ENCODE measurements at regions of chr20 and their contacts with region 1.

Region 1: GRCh38 chr20:23050847-23051631 is 1.6 kb upstream of the THBD start:
- DNase-seq: no peak
- H3K4me3 ChIP-seq: peak overlapping the region; percentile 22
- H3K27me3 ChIP-seq: peaks cover 27% of the 10 kb centered on the region
- CTCF ChIP-seq: peak; percentile 55

Region 2: GRCh38 chr20:23061734-23062561 is 10.9 kb after region 1 on chr20:
- CTCF ChIA-PET with region 1: interaction called, 10 read pairs
- POLR2A ChIA-PET with region 1: no interaction called
- DNase-seq: peak; percentile 7
- H3K4me3 ChIP-seq: no peak overlapping the region
- H3K27me3 ChIP-seq: no peaks in the 10 kb centered on the region; the same call in 1 of the 2 replicates
- CTCF ChIP-seq: peak; percentile 66

Region 3: GRCh38 chr20:23235173-23236027 is 184.4 kb after region 1 on chr20:
- CTCF ChIA-PET with region 1: interaction called, 10 read pairs
- POLR2A ChIA-PET with region 1: no interaction called
- DNase-seq: no peak
- H3K4me3 ChIP-seq: no peak overlapping the region
- H3K27me3 ChIP-seq: no peaks in the 10 kb centered on the region
- CTCF ChIP-seq: peak; percentile 75